ENCODE measurements at regions of chr15 and their contacts with region 1.

Region 1: GRCh38 chr15:51726351-51727073 is 10.9 kb downstream of the LYSMD2 start:
- DNase-seq: peak; percentile 79

Region 2: GRCh38 chr15:51622604-51623370 is 103.7 kb before region 1 on chr15 and contains the start of gene DMXL2:
- intact Hi-C with region 1: loop called (anchors 10 kb)
- DNase-seq: peak; percentile 92
- total RNA-seq, gene DMXL2: 8.0 TPM

Region 3: GRCh38 chr15:51759557-51760070 is 33.1 kb after region 1 on chr15:
- intact Hi-C with region 1: loop called (anchors 5 kb)
- DNase-seq: no peak

Region 4: GRCh38 chr15:51776952-51777574 is 50.6 kb after region 1 on chr15:
- intact Hi-C with region 1: loop called (anchors 5 kb)
- DNase-seq: no peak